ENCODE measurements at regions of chr7 and their contacts with region 1.

Region 1: GRCh38 chr7:30062591-30062990 is 34.4 kb downstream of the PLEKHA8 start:
- DNase-seq: peak; percentile 41
- CTCF ChIP-seq: peak; percentile 47

Region 2: GRCh38 chr7:29878081-29878688 is 184.4 kb before region 1 on chr7:
- in situ Hi-C with region 1: loop called (anchors 10 kb)
- DNase-seq: no peak
- CTCF ChIP-seq: peak; percentile 53

Region 3: GRCh38 chr7:30478349-30479201 is 416.0 kb after region 1 on chr7 and contains the start of gene NOD1:
- in situ Hi-C with region 1: no loop called
- DNase-seq: peak; percentile 90
- CTCF ChIP-seq: no peak

Measured in GM13976 (cell line).